Right ventricle myocardium inferior (tissue), 1 donor: ENCODE measurements at regions of chr22 and their contacts with region 1.

Region 1: DNA sequence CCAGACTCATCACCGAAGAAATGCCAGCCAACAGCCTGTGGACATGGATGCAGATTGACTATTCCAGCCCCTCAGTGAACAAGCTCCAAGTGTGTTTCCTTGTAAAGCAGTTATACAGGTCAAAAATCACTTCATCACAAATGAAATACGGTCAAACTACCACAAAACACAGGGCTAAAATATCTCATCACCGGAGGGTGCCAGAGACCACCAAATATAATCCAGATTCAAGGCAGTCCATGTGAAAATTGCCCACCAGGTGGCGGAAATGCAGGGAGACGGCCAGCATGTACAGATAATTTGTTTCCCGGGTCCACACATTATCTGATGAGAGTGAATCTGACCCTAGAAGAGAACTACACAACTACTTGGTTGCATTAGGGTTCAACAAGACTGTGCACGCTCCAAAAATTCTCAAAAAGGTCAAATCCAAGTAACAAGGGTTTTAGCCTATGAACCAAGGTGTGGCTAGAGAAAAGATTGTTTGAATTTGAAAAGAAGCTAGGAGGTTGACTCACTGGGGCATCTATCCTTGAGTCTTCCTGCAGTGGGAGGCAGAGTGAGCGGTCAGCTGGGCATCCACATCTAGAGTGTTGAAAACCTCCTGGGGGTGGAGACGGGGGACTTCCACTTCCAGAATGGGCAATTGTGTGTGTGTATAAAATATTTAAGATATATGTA is 71.7 kb downstream of the IGLL5 start:
- DNase-seq: peak; percentile 57
- ATAC-seq: peak; percentile 29

Region 2: DNA sequence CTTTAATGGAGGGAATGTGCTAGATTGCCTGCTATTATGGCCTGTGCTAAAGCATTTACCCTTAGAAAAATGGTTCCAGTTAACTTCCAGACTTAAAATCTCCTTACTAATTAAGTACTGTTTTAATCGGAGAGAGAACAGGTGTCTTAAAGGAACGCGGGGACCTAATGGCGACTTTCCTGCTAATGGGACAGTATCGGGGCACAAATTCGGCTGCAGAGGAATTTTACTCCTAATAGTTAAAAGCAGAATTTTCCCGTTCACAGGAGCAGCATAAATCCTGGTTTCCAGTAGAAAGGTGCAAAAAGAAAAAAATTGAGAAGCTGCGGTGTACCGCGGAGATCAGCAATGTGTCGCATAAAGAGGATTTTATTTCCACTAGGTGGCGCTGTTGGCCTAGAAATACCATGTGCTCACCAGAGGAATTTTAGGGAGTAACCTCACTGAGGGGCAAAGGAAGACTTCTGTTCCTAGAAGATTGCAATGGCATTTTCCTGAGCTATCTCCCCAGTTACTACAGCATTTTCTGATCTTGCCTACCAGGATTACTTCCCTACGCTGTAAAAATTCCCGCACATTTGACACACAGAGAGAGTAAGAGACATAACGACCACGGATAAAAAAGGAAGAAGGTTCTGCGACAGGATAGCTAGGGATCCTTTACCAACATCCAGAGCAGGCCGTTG is 495.3 kb before region 1 on chr22:
- intact Hi-C with region 1: loop called (anchors 5 kb)
- DNase-seq: no peak
- ATAC-seq: no peak

Region 3: DNA sequence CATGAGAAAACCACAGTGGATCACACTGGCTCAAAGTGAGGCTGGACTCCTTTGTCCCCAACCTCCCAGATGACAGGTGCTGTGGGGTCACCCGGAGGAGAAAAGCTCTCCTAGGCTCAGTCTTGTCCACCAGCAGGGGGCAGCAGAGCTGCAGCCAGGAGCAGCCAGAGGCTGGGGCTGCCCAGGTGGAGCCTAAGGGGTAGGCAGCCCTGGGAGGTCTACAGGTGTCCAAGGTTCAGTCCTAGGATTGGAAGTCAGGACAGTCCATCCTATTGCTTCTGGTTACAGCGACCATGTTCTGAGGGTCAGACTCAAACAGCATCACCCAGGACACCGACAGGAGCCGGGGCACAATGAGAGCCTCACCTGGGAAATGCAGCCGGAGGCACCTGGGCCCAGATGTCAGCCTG is 149.3 kb before region 1 on chr22:
- intact Hi-C with region 1: loop called (anchors 1 kb)
- DNase-seq: no peak
- ATAC-seq: peak; percentile 52

Region 4: GRCh38 chr22:22848364-22848866 is 110.9 kb before region 1 on chr22:
- intact Hi-C with region 1: loop called (anchors 5 kb)
- DNase-seq: no peak
- ATAC-seq: peak; percentile 52

Region 5: GRCh38 chr22:22925801-22926374 is 33.4 kb before region 1 on chr22:
- intact Hi-C with region 1: no loop called
- DNase-seq: no peak
- ATAC-seq: no peak

Region 6: GRCh38 chr22:23128269-23129108 is 169.2 kb after region 1 on chr22:
- intact Hi-C with region 1: loop called (anchors 1 kb)
- DNase-seq: no peak
- ATAC-seq: peak; percentile 81

Region 7: GRCh38 chr22:23281406-23282088 is 322.3 kb after region 1 on chr22:
- intact Hi-C with region 1: loop called (anchors 5 kb)
- DNase-seq: peak; percentile 89
- ATAC-seq: peak; percentile 77

Region 8: DNA sequence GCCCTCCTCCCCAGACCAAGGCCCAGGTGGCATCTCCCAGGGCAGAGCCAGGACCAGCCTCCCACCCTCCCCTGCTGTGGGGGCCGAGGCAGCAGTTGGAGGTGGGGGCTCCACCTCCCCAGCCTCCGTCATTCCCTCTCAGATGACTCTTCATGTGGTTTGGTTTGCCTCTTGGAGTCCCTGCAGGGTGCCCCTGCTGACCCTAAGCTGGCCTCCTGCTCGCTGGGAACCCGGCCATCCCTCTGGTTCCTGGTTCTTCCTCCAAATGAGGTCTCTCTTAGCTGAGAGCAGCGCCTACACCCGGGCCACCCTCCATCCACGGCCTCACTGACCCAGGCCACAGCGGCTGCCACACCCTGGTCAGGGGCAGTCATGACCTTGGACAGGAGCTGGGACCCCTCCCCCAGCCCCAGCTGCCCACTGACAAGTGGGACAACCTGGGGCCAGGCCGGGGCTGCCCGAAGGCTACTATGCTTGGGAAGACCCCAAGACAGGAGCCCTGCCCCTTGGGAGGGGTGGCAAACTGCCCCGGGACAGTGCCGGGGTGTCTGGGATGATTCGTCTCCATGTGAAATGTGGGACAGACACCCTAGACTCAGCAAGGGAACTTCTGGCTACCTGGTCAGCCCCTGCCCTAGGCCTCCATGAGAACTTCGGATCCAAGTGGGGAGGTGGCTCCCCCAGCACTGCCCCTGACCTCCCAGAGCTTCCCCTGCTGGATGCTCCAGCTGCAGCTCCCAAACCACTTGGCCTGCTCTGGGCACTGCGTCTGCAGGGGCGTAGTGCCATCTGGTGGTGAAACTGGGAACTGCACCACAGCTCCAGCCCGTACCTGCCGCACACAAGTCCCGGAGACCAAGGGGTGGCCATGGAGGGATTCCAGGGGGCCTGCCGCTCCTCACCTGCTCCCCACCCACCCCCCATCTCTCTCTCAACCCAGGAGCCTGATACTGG is 426.3 kb after region 1 on chr22:
- intact Hi-C with region 1: loop called (anchors 2 kb)
- DNase-seq: peak; percentile 87
- ATAC-seq: peak; percentile 76